ENCODE measurements at regions of chr1 and their contacts with region 1.

Region 1: GRCh38 chr1:167936068-167936929 is at the start of gene DCAF6:
- DNase-seq: peak; percentile 93 to 100 (median 96)
- ATAC-seq: peak; percentile 81
- H3K4me3 ChIP-seq: peak within 1 kb of the TSS; percentile 95
- H3K4me3 Mint-ChIP-seq: peak within 1 kb of the TSS; percentile 94
- H3K27ac ChIP-seq: peak within 1 kb of the TSS; percentile 77 to 96
- H3K27ac Mint-ChIP-seq: peak within 1 kb of the TSS; percentile 99
- H3K4me1 ChIP-seq: peaks cover 5% of the 10 kb centered on the region
- H3K4me1 Mint-ChIP-seq: peaks cover 62% of the 10 kb centered on the region
- H3K27me3 ChIP-seq: no peaks in the 10 kb centered on the region
- H3K27me3 Mint-ChIP-seq: no peaks in the 10 kb centered on the region
- CTCF ChIP-seq: no peak
- total RNA-seq, gene DCAF6: 13.3 to 13.6 TPM

Region 2: DNA sequence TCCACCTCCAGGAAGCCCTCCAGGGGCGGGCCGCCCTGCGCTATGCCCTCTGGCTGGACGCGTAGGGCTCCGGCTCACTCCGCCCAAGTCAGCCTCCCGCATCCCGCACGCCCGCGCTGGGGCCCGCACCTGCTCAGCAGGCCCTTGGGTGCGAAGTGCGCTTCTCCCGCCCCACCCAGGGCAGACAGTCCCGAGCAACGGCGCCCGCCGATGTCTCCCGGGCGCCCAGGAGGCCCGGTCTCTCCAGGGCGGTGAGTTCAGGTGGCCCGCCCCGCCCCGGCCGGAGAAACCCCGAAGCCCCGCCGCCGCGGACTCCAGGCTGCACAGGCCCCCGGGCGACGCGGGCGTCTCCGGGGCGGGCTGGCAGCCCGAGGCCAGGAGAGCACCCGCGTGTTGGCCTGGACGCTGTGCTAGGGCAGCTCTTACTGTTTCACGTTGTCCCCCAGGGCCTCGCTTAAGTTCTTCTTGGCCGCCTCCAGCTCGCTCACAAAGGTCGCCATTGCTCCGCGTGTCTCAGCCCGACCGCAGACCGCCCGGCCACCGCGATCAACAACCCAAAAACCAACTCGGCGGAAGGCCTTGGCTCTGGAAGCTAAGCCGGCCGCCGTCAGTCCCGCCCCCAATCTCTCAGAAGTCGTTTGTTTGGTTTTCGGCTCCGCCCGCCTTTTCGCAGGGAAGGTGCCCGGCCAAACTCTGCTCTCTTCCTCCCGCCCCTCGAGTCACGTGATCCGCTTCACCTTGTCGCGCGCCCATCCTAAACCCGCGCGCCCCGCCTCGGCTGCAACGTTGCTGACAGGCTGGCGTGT is 1060.4 kb before region 1 on chr1 and contains the start of gene TADA1:
- CTCF ChIA-PET with region 1: no interaction called
- POLR2A ChIA-PET with region 1: interaction called, 3 read pairs
- intact Hi-C with region 1: loop called in 1 of 2 experiments (anchors 5 kb)
- DNase-seq: peak; percentile 94 to 99 (median 98)
- ATAC-seq: peak; percentile 89
- H3K4me3 ChIP-seq: peak within 1 kb of the TSS; percentile 75
- H3K4me3 Mint-ChIP-seq: peak within 1 kb of the TSS; percentile 92
- H3K27ac ChIP-seq: peak within 1 kb of the TSS; percentile 52 to 73
- H3K27ac Mint-ChIP-seq: peak within 1 kb of the TSS; percentile 88
- H3K4me1 ChIP-seq: peaks cover 27% of the 10 kb centered on the region
- H3K4me1 Mint-ChIP-seq: peaks cover 58% of the 10 kb centered on the region
- H3K27me3 ChIP-seq: no peaks in the 10 kb centered on the region
- H3K27me3 Mint-ChIP-seq: no peaks in the 10 kb centered on the region
- CTCF ChIP-seq: no peak
- total RNA-seq, gene TADA1: 15.8 to 16.4 TPM

Region 3: GRCh38 chr1:167387251-167387910 is 548.9 kb before region 1 on chr1:
- CTCF ChIA-PET with region 1: no interaction called
- POLR2A ChIA-PET with region 1: no interaction called
- intact Hi-C with region 1: no loop called
- DNase-seq: no peak
- ATAC-seq: no peak
- H3K4me3 ChIP-seq: no peak overlapping the region
- H3K4me3 Mint-ChIP-seq: no peak overlapping the region
- H3K27ac ChIP-seq: no peak overlapping the region
- H3K27ac Mint-ChIP-seq: no peak overlapping the region
- H3K4me1 ChIP-seq: no peaks in the 10 kb centered on the region
- H3K4me1 Mint-ChIP-seq: no peaks in the 10 kb centered on the region
- H3K27me3 ChIP-seq: no peaks in the 10 kb centered on the region
- H3K27me3 Mint-ChIP-seq: no peaks in the 10 kb centered on the region
- CTCF ChIP-seq: no peak

Region 4: GRCh38 chr1:167715157-167715999 is 220.9 kb before region 1 on chr1:
- CTCF ChIA-PET with region 1: interaction called, 4 read pairs
- POLR2A ChIA-PET with region 1: interaction called, 16 read pairs
- intact Hi-C with region 1: loop called (anchors 2 to 5 kb)
- DNase-seq: peak; percentile 75 to 94 (median 84)
- ATAC-seq: peak; percentile 59
- H3K4me3 ChIP-seq: peak overlapping the region; percentile 79
- H3K4me3 Mint-ChIP-seq: peak overlapping the region; percentile 92
- H3K27ac ChIP-seq: peak overlapping the region in 1 of 2 donors; percentile 27
- H3K27ac Mint-ChIP-seq: peak overlapping the region; percentile 87
- H3K4me1 ChIP-seq: peaks cover 39% of the 10 kb centered on the region
- H3K4me1 Mint-ChIP-seq: peaks cover 47% of the 10 kb centered on the region
- H3K27me3 ChIP-seq: no peaks in the 10 kb centered on the region
- H3K27me3 Mint-ChIP-seq: peaks cover 18% of the 10 kb centered on the region
- CTCF ChIP-seq: peak; percentile 92

Region 5: GRCh38 chr1:168065506-168065905 is 129.2 kb after region 1 on chr1:
- CTCF ChIA-PET with region 1: no interaction called
- POLR2A ChIA-PET with region 1: no interaction called
- intact Hi-C with region 1: loop called in 1 of 2 experiments (anchors 10 kb)
- DNase-seq: no peak
- ATAC-seq: no peak
- H3K4me3 ChIP-seq: no peak overlapping the region
- H3K4me3 Mint-ChIP-seq: no peak overlapping the region
- H3K27ac ChIP-seq: no peak overlapping the region
- H3K27ac Mint-ChIP-seq: no peak overlapping the region
- H3K4me1 ChIP-seq: no peaks in the 10 kb centered on the region
- H3K4me1 Mint-ChIP-seq: no peaks in the 10 kb centered on the region
- H3K27me3 ChIP-seq: no peaks in the 10 kb centered on the region
- H3K27me3 Mint-ChIP-seq: no peaks in the 10 kb centered on the region
- CTCF ChIP-seq: no peak

Region 6: GRCh38 chr1:168225476-168226190 is 289.3 kb after region 1 on chr1 and contains the start of gene SFT2D2:
- CTCF ChIA-PET with region 1: no interaction called
- POLR2A ChIA-PET with region 1: interaction called, 15 read pairs
- intact Hi-C with region 1: no loop called
- DNase-seq: peak; percentile 57 to 89 (median 72)
- ATAC-seq: peak; percentile 96
- H3K4me3 ChIP-seq: peak within 1 kb of the TSS; percentile 94
- H3K4me3 Mint-ChIP-seq: peak within 1 kb of the TSS; percentile 99
- H3K27ac ChIP-seq: peak within 1 kb of the TSS; percentile 28 to 66
- H3K27ac Mint-ChIP-seq: peak within 1 kb of the TSS; percentile 88
- H3K4me1 ChIP-seq: peaks cover 48% of the 10 kb centered on the region
- H3K4me1 Mint-ChIP-seq: peaks cover 54% of the 10 kb centered on the region
- H3K27me3 ChIP-seq: no peaks in the 10 kb centered on the region
- H3K27me3 Mint-ChIP-seq: peaks cover 10% of the 10 kb centered on the region
- CTCF ChIP-seq: no peak
- total RNA-seq, gene SFT2D2: 47.0 to 51.7 TPM

Region 7: DNA sequence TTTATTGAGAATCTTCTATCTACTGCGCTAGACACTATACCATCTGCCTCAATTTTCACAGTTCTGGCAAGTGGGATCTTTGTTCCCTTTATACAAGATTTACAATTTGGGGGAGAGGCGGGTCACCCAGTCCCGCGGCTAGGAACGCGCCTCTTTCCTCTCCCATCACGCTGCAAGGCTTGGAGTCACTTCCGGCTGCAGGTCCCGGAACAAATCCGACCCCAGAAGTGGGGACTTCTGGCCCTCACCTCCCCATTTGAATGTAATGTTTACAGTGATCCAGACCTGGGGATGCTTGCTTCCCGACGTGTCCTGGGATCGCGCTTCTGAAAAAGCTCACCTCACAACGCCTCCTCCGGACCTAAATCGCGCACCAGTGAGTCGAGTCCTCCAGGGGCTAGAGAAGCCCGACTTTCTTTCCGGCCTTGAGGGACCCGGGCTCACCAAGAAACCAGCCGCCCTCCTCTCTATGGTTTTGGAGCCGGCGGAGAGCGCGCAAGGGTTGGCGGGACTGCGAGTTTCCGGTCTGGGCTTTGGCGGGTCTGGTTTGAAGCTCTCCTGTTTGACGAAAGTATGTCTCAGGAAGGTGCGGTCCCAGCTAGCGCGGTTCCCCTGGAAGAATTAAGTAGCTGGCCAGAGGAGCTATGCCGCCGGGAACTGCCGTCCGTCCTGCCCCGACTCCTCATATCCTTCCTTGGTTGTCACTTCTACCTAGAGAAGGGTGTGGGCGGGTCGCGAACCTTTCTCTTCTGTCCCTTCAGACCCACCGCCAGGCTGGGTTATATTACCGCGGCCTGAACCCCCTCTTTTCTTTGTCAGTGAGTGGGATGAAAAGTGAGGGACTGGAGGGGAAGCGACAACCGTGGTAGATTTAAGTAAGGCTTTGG is 1858.5 kb after region 1 on chr1 and contains the start of gene METTL18:
- CTCF ChIA-PET with region 1: no interaction called
- POLR2A ChIA-PET with region 1: interaction called, 3 read pairs
- intact Hi-C with region 1: loop called in 1 of 2 experiments (anchors 10 kb)
- DNase-seq: peak; percentile 82 to 96 (median 88)
- ATAC-seq: peak; percentile 97
- H3K4me3 ChIP-seq: peak within 1 kb of the TSS; percentile 81
- H3K4me3 Mint-ChIP-seq: peak within 1 kb of the TSS; percentile 99
- H3K27ac ChIP-seq: peak within 1 kb of the TSS; percentile 89 to 94
- H3K27ac Mint-ChIP-seq: peak within 1 kb of the TSS; percentile 94
- H3K4me1 ChIP-seq: peaks cover 13% of the 10 kb centered on the region
- H3K4me1 Mint-ChIP-seq: peaks cover 52% of the 10 kb centered on the region
- H3K27me3 ChIP-seq: no peaks in the 10 kb centered on the region
- H3K27me3 Mint-ChIP-seq: no peaks in the 10 kb centered on the region
- CTCF ChIP-seq: no peak
- total RNA-seq, gene METTL18: 5.1 to 5.6 TPM

Measured in CD4-positive, alpha-beta T cell (primary cell).